ENCODE measurements at regions of chr9 and their contacts with region 1.

Region 1: DNA sequence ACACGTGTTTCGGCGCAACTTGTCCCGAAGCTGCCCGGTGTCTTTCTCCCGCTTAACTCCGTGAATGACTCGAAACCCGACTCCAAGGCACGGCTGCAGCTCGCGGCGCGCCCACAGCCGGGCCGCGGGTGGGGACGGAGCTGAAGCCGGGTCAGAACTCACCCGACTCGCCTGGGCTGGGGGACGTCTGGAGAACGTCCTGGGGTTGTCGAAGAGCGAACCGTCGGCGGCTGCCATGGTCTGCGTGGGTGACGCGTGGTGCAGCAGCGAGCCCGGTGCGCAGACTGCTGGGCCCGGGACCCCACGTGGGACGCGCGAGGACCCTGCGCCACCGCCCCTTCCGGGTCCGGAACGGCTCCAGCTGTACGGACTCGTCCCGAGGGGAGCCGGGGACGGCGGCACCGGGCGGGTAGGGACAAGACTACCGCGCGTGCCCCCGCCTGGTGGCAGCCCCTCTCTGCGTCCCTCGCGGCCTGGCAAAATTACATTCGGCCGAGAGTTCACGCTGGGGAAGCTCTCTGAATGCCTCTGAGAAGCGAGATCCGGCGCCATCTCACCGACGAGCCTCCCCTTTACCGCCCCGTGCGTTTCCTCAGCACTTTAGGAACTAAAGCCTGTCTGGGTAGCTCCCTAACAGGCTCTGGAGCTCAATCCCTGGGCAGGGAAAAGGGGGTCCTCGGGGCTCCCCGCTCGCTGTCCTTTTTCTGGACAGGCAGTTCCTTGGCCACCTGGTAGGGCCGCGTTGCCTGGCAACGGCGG is at the start of gene DDX31:
- DNase-seq: peak in 1 of 2 experiments; percentile 93
- H3K4me3 ChIP-seq: peak within 1 kb of the TSS; percentile 81 to 99 (median 90)
- H3K27ac ChIP-seq: peak within 1 kb of the TSS; percentile 84; the same call in 1 of the 2 replicates
- H3K4me1 ChIP-seq: peaks cover 0 to 7% (median 6%) of the 10 kb centered on the region in 4 experiments; a peak in 5 of 7 replicates
- H3K27me3 ChIP-seq: no peaks in the 10 kb centered on the region
- CTCF ChIP-seq: no peak
- EP300 ChIP-seq: no peak
- POLR2A ChIP-seq: peak in 1 of 2 experiments; percentile 54
- RAD21 ChIP-seq: 0 out of 4 replicates have a peak, but pooled peaks of 1 of the 2 experiments have one; percentile 2
- total RNA-seq, gene DDX31: 23.7 and 25.2 TPM in 2 replicates

Region 2: DNA sequence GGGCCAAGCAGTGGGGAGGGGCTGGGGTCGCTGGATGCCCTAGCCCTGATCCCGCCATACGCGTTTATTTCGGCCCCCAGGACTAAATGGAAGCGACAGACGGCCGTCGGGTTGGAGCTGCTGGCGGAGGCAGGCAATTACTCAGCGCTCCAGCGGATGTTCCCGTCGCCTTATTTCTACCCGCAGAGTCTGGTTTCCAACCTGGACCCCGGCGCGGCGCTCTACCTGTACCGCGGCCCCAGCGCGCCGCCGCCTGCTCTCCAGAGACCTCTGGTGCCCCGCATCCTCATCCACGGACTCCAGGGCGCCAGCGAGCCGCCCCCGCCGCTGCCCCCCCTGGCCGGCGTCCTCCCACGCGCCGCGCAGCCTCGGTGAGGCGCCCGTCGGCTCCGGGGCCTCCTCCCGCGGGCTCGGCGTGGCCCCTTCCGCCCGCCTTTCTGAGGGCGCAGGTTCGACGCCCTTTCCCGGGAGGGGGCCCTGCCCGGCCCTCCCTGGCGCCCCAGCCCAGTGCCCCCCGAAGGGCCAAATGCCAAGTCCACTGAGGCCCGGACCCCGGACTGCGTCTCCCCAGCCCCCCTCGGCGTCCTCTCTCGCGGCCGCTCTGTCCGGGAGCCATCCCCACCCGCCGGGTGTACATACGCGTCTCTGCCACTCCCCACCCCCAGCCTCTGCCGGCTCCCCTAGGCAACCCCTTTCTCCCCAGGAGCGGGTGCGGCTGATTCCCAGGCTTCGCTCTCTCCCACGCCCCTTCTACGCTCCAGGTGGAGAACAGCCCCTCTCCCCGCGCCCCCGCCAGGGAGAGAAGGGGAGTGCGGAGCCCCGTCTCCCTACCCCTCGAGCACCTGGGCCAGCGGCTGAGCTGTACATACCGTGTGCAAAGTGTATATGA is 80.5 kb before region 1 on chr9:
- CTCF ChIA-PET with region 1: no interaction called
- POLR2A ChIA-PET with region 1: interaction called, 10 read pairs
- DNase-seq: peak in 1 of 2 experiments; percentile 74
- H3K4me3 ChIP-seq: peak overlapping the region; percentile 12 to 65 (median 36); a peak in 6 of 8 replicates
- H3K27ac ChIP-seq: no peak overlapping the region
- H3K4me1 ChIP-seq: peaks cover 3 to 73% (median 44%) of the 10 kb centered on the region in 4 experiments
- H3K27me3 ChIP-seq: peaks cover 56 to 67% (median 63%) of the 10 kb centered on the region in 4 experiments
- CTCF ChIP-seq: no peak
- EP300 ChIP-seq: no peak
- POLR2A ChIP-seq: no peak
- RAD21 ChIP-seq: no peak

Region 3: DNA sequence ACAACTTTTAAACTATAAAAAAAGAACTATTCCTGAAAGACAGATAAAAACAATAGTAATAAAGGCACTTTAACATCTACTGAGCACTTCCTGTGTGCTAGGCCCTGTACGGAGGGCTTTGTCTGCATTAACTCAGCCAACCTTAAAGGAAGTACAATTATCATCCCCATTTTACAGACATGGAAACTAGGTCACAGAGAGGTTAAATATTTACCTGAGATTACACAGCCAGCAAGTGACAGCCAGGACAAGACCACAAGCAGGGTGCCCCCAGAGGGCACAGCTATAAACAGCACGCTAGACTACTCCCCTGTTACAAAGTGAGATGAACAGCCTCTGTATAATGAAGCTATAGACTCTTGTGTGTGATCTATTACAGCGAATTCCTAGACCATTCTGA is 25.6 kb before region 1 on chr9:
- CTCF ChIA-PET with region 1: interaction called, 12 read pairs
- POLR2A ChIA-PET with region 1: interaction called, 5 read pairs
- DNase-seq: no peak
- H3K4me3 ChIP-seq: no peak overlapping the region
- H3K27ac ChIP-seq: no peak overlapping the region
- H3K4me1 ChIP-seq: no peaks in the 10 kb centered on the region
- H3K27me3 ChIP-seq: no peaks in the 10 kb centered on the region
- CTCF ChIP-seq: peak; percentile 31 to 61 (median 54); a peak in 3 of 4 replicates
- EP300 ChIP-seq: no peak
- POLR2A ChIP-seq: no peak
- RAD21 ChIP-seq: peak; percentile 31 to 47; a peak in 3 of 4 replicates

Region 4: DNA sequence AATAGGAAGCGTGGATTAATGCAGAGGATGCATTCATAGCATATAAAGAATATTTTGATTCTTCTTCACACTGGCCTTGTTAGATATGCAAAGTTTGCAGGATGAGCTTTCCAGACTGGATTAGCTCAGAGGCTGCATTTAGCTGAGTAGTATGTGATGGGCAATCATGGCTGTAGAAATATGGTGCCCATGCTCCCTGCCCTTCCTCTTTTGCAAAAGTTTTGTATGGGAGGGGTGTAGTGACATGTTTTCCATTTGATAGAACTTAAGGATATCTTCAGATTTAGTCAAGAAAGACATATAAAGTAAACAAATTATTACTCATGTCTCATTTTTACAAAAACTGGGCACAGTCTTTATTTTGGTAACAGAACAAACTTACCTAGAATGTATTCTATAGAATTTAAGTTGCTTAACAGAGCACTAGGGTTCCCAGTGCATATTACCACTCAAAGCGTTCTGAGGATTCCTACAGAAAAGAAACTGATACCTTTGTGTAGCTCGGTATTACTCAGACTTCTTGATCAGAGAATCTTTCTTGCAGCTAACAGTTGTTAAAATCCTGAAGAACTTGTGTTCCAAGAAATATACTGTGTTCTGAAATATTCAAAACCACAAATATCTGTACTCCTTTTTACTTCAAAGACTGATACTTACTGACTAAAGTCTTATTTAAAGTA is 10.2 kb after region 1 on chr9:
- CTCF ChIA-PET with region 1: no interaction called
- POLR2A ChIA-PET with region 1: interaction called, 10 read pairs
- DNase-seq: no peak
- H3K4me3 ChIP-seq: no peak overlapping the region
- H3K27ac ChIP-seq: no peak overlapping the region
- H3K4me1 ChIP-seq: no peaks in the 10 kb centered on the region
- H3K27me3 ChIP-seq: no peaks in the 10 kb centered on the region
- CTCF ChIP-seq: no peak
- EP300 ChIP-seq: no peak
- POLR2A ChIP-seq: no peak
- RAD21 ChIP-seq: no peak

Measured in H1 (cell line).